Transverse colon (tissue), 4 donors: ENCODE measurements at regions of chr10 and their contacts with region 1.

Region 1: DNA sequence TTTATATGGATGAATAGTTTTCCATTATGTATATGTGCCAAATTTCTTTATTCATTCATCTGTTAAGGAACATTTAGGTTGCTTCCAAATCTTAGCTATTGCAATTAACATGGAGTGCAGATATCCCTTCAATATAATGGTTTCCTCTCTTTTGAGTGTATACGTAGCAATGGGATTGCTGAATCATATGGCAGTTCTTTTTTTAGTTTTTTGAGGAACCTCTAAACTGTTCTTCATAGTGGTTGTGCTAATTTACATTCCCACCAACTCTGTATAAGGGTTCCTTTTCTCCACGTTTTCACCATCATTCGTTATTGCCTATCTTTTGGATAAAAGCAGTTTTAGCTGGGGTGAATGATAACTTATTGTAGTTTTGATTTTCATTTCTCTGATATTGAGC is 46.5 kb downstream of the FAS start:
- DNase-seq: no peak
- H3K4me3 ChIP-seq: no peak overlapping the region
- H3K27ac ChIP-seq: no peak overlapping the region
- H3K4me1 ChIP-seq: peaks cover 0 to 8% (median 2%) of the 10 kb centered on the region in 4 donors
- H3K27me3 ChIP-seq: no peaks in the 10 kb centered on the region
- CTCF ChIP-seq: no peak
- EP300 ChIP-seq: no peak
- POLR2A ChIP-seq: no peak

Region 2: GRCh38 chr10:89954787-89955566 is 917.9 kb after region 1 on chr10:
- in situ Hi-C with region 1: no loop called
- intact Hi-C with region 1: loop called (anchors 5 kb)
- DNase-seq: no peak
- H3K4me3 ChIP-seq: no peak overlapping the region
- H3K27ac ChIP-seq: no peak overlapping the region
- H3K4me1 ChIP-seq: no peaks in the 10 kb centered on the region
- H3K27me3 ChIP-seq: no peaks in the 10 kb centered on the region
- CTCF ChIP-seq: peak; percentile 16 to 34 (median 28)
- EP300 ChIP-seq: no peak
- POLR2A ChIP-seq: no peak